Transverse colon (tissue), 4 donors: ENCODE measurements at regions of chr19 and their contacts with region 1.

Region 1: GRCh38 chr19:13150187-13150930 is at the starts of genes IER2 and STX10:
- DNase-seq: peak; percentile 96
- H3K4me3 ChIP-seq: peak within 1 kb of the TSS; percentile 64 to 86 (median 78)
- H3K27ac ChIP-seq: peak within 1 kb of the TSS; percentile 96 to 100 (median 99)
- H3K4me1 ChIP-seq: peaks cover 3 to 28% (median 15%) of the 10 kb centered on the region in 4 donors
- H3K27me3 ChIP-seq: no peaks in the 10 kb centered on the region
- CTCF ChIP-seq: peak; percentile 41 to 82 (median 61)
- EP300 ChIP-seq: no peak
- POLR2A ChIP-seq: peak; percentile 91
- total RNA-seq, gene IER2: 184 to 503 (median 244) TPM
- total RNA-seq, gene STX10: 69.7 to 164 (median 84.2) TPM

Region 2: GRCh38 chr19:12789904-12790619 is 360.3 kb before region 1 on chr19:
- in situ Hi-C with region 1: no loop called
- intact Hi-C with region 1: loop called (anchors 10 kb)
- DNase-seq: peak; percentile 97
- H3K4me3 ChIP-seq: peak overlapping the region; percentile 56 to 90 (median 87)
- H3K27ac ChIP-seq: peak overlapping the region; percentile 97 to 99 (median 98)
- H3K4me1 ChIP-seq: peaks cover 32 to 64% (median 57%) of the 10 kb centered on the region in 4 donors
- H3K27me3 ChIP-seq: no peaks in the 10 kb centered on the region
- CTCF ChIP-seq: no peak
- EP300 ChIP-seq: peak; percentile 79
- POLR2A ChIP-seq: peak; percentile 98

Region 3: DNA sequence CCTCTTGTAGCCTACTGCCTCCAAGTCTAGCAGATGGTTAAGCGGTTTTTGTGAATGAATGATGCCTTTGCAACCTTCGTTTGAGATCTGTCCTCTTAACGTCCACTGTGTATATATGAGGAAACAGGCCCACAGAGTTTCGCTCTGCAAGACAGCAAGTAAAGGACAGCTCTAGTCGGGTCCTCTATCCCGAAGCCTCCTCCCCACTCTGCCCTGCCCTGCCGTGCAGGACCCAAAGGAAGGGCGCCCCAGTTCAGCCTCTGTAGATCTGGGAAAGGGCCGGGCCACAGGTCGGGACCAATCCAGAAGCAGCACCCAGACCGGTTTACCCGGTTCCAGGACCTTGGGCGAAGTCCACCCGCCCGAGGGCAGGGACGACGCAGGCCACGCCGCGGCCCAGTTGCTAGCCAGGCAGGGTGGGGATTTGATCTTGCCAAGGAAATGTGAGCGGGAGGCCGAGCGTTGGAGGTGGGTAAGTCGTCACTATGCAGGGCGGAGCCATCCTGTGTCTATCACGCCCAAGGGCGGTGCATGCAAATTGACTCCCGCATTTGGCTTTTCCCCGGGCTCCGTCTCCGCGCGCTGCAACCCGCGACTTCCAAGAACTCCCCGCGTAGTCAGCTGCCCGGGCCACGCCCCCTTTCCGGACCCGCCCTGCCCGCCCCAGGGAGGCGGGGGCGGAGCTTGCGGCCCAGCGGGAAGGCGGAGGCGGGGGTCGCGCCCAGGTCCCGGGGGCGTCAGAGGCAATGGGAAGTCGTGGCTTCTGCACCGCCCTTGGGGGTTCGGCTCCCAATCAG is 12.4 kb after region 1 on chr19:
- in situ Hi-C with region 1: no loop called
- intact Hi-C with region 1: loop called (anchors 1 kb)
- DNase-seq: peak; percentile 99
- H3K4me3 ChIP-seq: peak overlapping the region; percentile 20 to 46 (median 26)
- H3K27ac ChIP-seq: peak overlapping the region; percentile 95 to 98 (median 97)
- H3K4me1 ChIP-seq: peaks cover 36 to 67% (median 55%) of the 10 kb centered on the region in 4 donors
- H3K27me3 ChIP-seq: no peaks in the 10 kb centered on the region
- CTCF ChIP-seq: no peak
- EP300 ChIP-seq: peak; percentile 58
- POLR2A ChIP-seq: peak; percentile 92

Region 4: GRCh38 chr19:13172897-13173752 is 22.8 kb after region 1 on chr19:
- in situ Hi-C with region 1: no loop called
- intact Hi-C with region 1: no loop called
- DNase-seq: no peak
- H3K4me3 ChIP-seq: no peak overlapping the region
- H3K27ac ChIP-seq: peak overlapping the region; percentile 59 to 78 (median 70)
- H3K4me1 ChIP-seq: peaks cover 8 to 46% (median 25%) of the 10 kb centered on the region in 4 donors
- H3K27me3 ChIP-seq: no peaks in the 10 kb centered on the region
- CTCF ChIP-seq: no peak
- EP300 ChIP-seq: no peak
- POLR2A ChIP-seq: no peak

Region 5: GRCh38 chr19:14517840-14518505 is 1367.6 kb after region 1 on chr19 and contains the start of gene DNAJB1:
- in situ Hi-C with region 1: no loop called
- intact Hi-C with region 1: loop called (anchors 10 kb)
- DNase-seq: peak; percentile 88
- H3K4me3 ChIP-seq: peak within 1 kb of the TSS; percentile 64 to 99 (median 94)
- H3K27ac ChIP-seq: peak within 1 kb of the TSS; percentile 98 to 100 (median 100)
- H3K4me1 ChIP-seq: peaks cover 24 to 65% (median 37%) of the 10 kb centered on the region in 4 donors
- H3K27me3 ChIP-seq: no peaks in the 10 kb centered on the region
- CTCF ChIP-seq: peak in 1 of 5 experiments; percentile 13
- EP300 ChIP-seq: no peak
- POLR2A ChIP-seq: peak; percentile 99
- total RNA-seq, gene DNAJB1: 20.3 to 111 (median 93.8) TPM